ENCODE measurements at regions of chr5 and their contacts with region 1.

Region 1: GRCh38 chr5:126801992-126802294 is 25.0 kb downstream of the LMNB1 start:
- DNase-seq: peak; percentile 71
- ATAC-seq: peak; percentile 85
- H3K4me3 ChIP-seq: no peak overlapping the region
- H3K27ac ChIP-seq: no peak overlapping the region
- H3K4me1 ChIP-seq: no peaks in the 10 kb centered on the region; the same call in 1 of the 2 replicates
- H3K27me3 ChIP-seq: no peaks in the 10 kb centered on the region
- CTCF ChIP-seq: peak; percentile 64
- POLR2A ChIP-seq: no peak
- RAD21 ChIP-seq: peak; percentile 70

Region 2: GRCh38 chr5:126339215-126339805 is 462.6 kb before region 1 on chr5:
- CTCF ChIA-PET with region 1: no interaction called
- POLR2A ChIA-PET with region 1: no interaction called
- dilution Hi-C with region 1: no loop called
- in situ Hi-C with region 1: no loop called
- intact Hi-C with region 1: loop called (anchors 5 kb)
- DNase-seq: peak; percentile 75
- ATAC-seq: peak; percentile 75
- H3K4me3 ChIP-seq: no peak overlapping the region
- H3K27ac ChIP-seq: no peak overlapping the region
- H3K4me1 ChIP-seq: no peaks in the 10 kb centered on the region
- H3K27me3 ChIP-seq: no peaks in the 10 kb centered on the region; the same call in 1 of the 2 replicates
- CTCF ChIP-seq: peak; percentile 86
- POLR2A ChIP-seq: no peak
- RAD21 ChIP-seq: peak; percentile 93

Region 3: GRCh38 chr5:126544087-126544740 is 257.7 kb before region 1 on chr5:
- CTCF ChIA-PET with region 1: no interaction called
- POLR2A ChIA-PET with region 1: no interaction called
- dilution Hi-C with region 1: no loop called
- in situ Hi-C with region 1: no loop called
- intact Hi-C with region 1: loop called (anchors 5 kb)
- DNase-seq: peak; percentile 44
- ATAC-seq: peak; percentile 64
- H3K4me3 ChIP-seq: no peak overlapping the region
- H3K27ac ChIP-seq: no peak overlapping the region
- H3K4me1 ChIP-seq: no peaks in the 10 kb centered on the region
- H3K27me3 ChIP-seq: no peaks in the 10 kb centered on the region
- CTCF ChIP-seq: peak; percentile 48
- POLR2A ChIP-seq: no peak
- RAD21 ChIP-seq: peak; percentile 36

Region 4: GRCh38 chr5:126600631-126601511 is 201.1 kb before region 1 on chr5 and contains the start of gene PHAX:
- CTCF ChIA-PET with region 1: no interaction called
- POLR2A ChIA-PET with region 1: no interaction called
- dilution Hi-C with region 1: no loop called
- in situ Hi-C with region 1: no loop called
- intact Hi-C with region 1: loop called (anchors 2 kb)
- DNase-seq: peak; percentile 76
- ATAC-seq: peak; percentile 98
- H3K4me3 ChIP-seq: peak within 1 kb of the TSS; percentile 94
- H3K27ac ChIP-seq: peak within 1 kb of the TSS; percentile 94
- H3K4me1 ChIP-seq: peaks cover 4% of the 10 kb centered on the region
- H3K27me3 ChIP-seq: no peaks in the 10 kb centered on the region
- CTCF ChIP-seq: peak; percentile 92
- POLR2A ChIP-seq: peak; percentile 40; the same call in 1 of the 2 replicates
- RAD21 ChIP-seq: peak; percentile 38
- total RNA-seq, gene PHAX: 46.4 and 104 TPM in 2 replicates

Region 5: DNA sequence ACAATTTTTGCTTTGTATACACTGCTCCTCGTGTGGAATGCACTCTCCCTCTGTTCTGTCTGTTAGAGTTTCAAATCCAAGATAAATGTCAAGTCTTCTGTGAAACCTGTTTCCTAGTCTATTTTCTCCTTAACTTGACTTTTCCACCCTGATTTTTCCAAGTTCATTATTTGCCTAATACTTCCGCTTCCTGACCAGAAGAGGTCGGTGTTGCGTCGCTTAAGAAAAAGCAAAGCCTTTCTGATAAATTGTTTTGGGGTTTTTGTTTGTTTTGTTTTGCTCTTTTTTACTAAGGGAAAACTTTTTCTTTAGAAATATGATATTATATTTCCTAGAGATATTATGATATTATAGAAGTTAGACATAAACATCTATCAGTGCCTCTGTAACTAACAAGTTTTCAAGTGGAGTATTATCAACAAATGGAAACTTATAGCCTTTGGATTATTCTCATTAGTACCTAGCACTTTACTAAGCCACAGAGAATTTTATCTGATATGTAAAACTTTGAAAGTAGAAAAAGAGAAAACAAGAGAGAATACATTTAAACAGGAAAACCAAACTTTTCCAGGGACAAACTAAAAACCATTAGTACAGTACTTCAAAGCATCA is 145.4 kb before region 1 on chr5:
- CTCF ChIA-PET with region 1: interaction called, 3 read pairs
- POLR2A ChIA-PET with region 1: no interaction called
- dilution Hi-C with region 1: loop called (anchors 25 kb)
- in situ Hi-C with region 1: no loop called
- intact Hi-C with region 1: loop called (anchors 1 kb)
- DNase-seq: peak; percentile 57
- ATAC-seq: peak; percentile 44; the same call in 1 of the 2 replicates
- H3K4me3 ChIP-seq: no peak overlapping the region
- H3K27ac ChIP-seq: no peak overlapping the region
- H3K4me1 ChIP-seq: no peaks in the 10 kb centered on the region
- H3K27me3 ChIP-seq: no peaks in the 10 kb centered on the region
- CTCF ChIP-seq: peak; percentile 94
- POLR2A ChIP-seq: no peak
- RAD21 ChIP-seq: peak; percentile 84

Region 6: DNA sequence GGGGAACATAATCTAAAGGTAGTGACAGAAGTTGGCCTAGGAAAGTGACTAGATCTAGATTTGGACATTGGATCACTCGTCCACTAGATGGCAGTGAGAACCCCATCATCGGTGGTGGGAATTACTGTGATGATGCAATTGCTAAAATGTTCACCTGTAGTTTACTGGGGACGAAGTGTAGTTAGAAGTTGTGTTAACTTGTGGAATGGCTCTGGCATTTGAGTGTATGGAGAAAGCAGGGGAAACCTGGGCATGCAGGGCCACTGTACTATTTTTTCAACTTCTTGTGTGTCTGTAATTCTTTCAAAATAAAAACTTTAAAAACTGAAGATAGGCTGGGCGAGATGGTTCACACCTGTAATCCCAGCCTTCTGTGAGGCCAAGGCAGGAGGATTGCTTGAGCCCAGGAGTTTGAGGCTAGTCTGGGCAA is 125.7 kb before region 1 on chr5:
- CTCF ChIA-PET with region 1: interaction called, 7 read pairs
- POLR2A ChIA-PET with region 1: no interaction called
- dilution Hi-C with region 1: loop called (anchors 25 kb)
- in situ Hi-C with region 1: loop called (anchors 5 kb)
- intact Hi-C with region 1: loop called (anchors 1 kb)
- DNase-seq: peak; percentile 60
- ATAC-seq: peak; percentile 78
- H3K4me3 ChIP-seq: no peak overlapping the region
- H3K27ac ChIP-seq: no peak overlapping the region
- H3K4me1 ChIP-seq: no peaks in the 10 kb centered on the region
- H3K27me3 ChIP-seq: no peaks in the 10 kb centered on the region; the same call in 1 of the 2 replicates
- CTCF ChIP-seq: peak; percentile 86
- POLR2A ChIP-seq: no peak
- RAD21 ChIP-seq: peak; percentile 82